Endothelial cell of umbilical vein (primary cell): ENCODE measurements at regions of chr13 and their contacts with region 1.

Region 1: DNA sequence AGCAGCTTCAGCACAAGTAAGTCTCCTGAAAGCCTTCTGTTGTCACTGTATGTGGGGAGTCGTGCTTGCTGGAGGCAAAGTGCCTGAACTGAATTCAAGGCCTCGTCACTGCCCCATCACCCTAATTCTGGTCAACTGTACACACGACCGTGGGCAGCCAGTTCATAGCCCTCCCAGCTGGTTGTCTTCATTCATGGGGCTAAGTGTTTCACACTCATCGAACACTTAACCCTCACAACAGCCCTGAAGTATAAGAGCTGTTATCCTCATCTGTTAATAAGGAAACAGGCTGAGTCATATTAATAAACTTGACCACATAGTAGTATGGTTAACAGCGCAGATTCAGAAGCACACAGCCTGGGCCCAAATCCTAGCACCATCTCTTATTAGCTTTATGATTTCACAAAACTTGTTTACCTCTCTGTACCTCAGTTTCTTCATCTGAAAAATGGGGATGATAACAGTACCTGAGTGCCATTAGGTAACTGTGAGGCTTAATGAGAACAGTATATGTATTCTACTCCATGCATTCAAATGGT is 66.7 kb downstream of the CDADC1 start:
- DNase-seq: no peak
- H3K4me3 ChIP-seq: no peak overlapping the region
- H3K27ac ChIP-seq: peak overlapping the region; percentile 84
- H3K4me1 ChIP-seq: peaks cover 10% of the 10 kb centered on the region
- H3K27me3 ChIP-seq: no peaks in the 10 kb centered on the region
- CTCF ChIP-seq: no peak
- POLR2A ChIP-seq: no peak

Region 2: GRCh38 chr13:49495783-49496762 is 181.7 kb after region 1 on chr13 and contains the start of gene PHF11:
- CTCF ChIA-PET with region 1: no interaction called
- POLR2A ChIA-PET with region 1: no interaction called
- dilution Hi-C with region 1: no loop called
- intact Hi-C with region 1: loop called (anchors 5 kb)
- DNase-seq: peak; percentile 58
- H3K4me3 ChIP-seq: peak within 1 kb of the TSS; percentile 42 to 76 (median 58)
- H3K27ac ChIP-seq: peak within 1 kb of the TSS; percentile 73
- H3K4me1 ChIP-seq: peaks cover 11% of the 10 kb centered on the region
- H3K27me3 ChIP-seq: no peaks in the 10 kb centered on the region
- CTCF ChIP-seq: peak in 1 of 2 donors; percentile 5
- POLR2A ChIP-seq: peak; percentile 59
- total RNA-seq, gene PHF11: 28.2 and 32.4 TPM in 2 replicates

Region 3: DNA sequence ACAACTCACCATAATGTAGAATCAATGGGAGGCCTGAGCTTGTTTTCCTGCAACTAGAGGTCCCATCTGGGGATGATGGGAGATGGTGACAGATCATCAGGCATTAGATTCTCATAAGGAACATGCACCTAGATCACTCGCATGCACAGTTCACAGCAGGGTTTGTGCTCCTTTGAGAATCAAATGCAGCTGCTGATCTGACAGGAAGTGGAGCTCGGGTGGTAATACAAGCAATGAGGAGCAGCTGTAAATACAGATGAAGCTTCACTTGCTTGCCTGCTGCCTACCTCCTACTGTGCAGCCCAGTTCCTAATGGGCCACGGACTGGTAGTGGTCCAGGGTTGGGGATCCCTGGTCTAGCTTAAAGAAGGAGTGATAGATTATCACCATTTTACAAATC is 445.1 kb after region 1 on chr13:
- CTCF ChIA-PET with region 1: no interaction called
- POLR2A ChIA-PET with region 1: no interaction called
- dilution Hi-C with region 1: no loop called
- intact Hi-C with region 1: no loop called
- DNase-seq: no peak
- H3K4me3 ChIP-seq: no peak overlapping the region
- H3K27ac ChIP-seq: no peak overlapping the region
- H3K4me1 ChIP-seq: no peaks in the 10 kb centered on the region
- H3K27me3 ChIP-seq: no peaks in the 10 kb centered on the region
- CTCF ChIP-seq: no peak
- POLR2A ChIP-seq: no peak